ENCODE measurements at regions of chr2 and their contacts with region 1.

Region 1: DNA sequence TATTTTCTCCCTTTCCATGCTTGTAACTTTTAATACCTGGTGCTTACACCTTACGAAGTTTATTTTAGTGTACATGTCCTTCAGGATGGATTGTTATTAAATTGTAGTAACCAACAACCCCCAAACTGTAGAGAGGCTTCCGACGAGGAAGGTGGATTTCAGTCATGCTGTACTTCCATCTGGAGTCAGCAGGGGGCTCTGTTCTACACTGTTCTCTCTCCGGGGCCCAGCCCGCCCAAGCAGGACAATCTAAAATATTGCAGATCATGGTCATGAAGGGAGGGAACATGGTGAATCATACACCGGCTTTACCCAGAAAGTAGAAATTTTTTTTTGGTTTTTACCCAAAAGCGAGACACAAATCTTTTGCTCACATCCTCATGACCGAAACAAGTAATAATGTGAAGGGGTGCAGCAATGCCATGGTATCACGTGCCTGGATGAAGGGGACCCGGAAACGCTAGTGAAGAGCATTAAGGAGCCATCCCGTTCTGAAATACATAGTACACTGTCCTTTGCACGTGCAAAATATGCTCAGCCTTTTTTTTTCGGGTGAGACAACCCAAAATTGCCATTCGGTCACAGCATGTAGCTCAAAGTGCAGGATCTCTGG is 884.8 kb downstream of the EPHA4 start:
- DNase-seq: peak; percentile 44
- ATAC-seq: peak; percentile 97
- H3K4me3 ChIP-seq: no peak overlapping the region
- H3K27ac ChIP-seq: no peak overlapping the region
- H3K4me1 ChIP-seq: no peaks in the 10 kb centered on the region
- H3K27me3 ChIP-seq: no peaks in the 10 kb centered on the region
- CTCF ChIP-seq: peak; percentile 61 to 89 (median 84); a peak in 5 of 6 replicates
- POLR2A ChIP-seq: no peak
- RAD21 ChIP-seq: peak; percentile 85

Region 2: GRCh38 chr2:221100467-221101089 is 413.2 kb after region 1 on chr2:
- CTCF ChIA-PET with region 1: no interaction called
- POLR2A ChIA-PET with region 1: no interaction called
- RAD21 ChIA-PET with region 1: no interaction called
- intact Hi-C with region 1: loop called (anchors 1 kb)
- DNase-seq: peak; percentile 3
- ATAC-seq: peak; percentile 81
- H3K4me3 ChIP-seq: no peak overlapping the region
- H3K27ac ChIP-seq: no peak overlapping the region
- H3K4me1 ChIP-seq: no peaks in the 10 kb centered on the region
- H3K27me3 ChIP-seq: peaks cover 3% of the 10 kb centered on the region; the same call in 1 of the 2 replicates
- CTCF ChIP-seq: peak; percentile 39 to 47 (median 43); a peak in 5 of 6 replicates
- POLR2A ChIP-seq: no peak
- RAD21 ChIP-seq: peak; percentile 67

Region 3: DNA sequence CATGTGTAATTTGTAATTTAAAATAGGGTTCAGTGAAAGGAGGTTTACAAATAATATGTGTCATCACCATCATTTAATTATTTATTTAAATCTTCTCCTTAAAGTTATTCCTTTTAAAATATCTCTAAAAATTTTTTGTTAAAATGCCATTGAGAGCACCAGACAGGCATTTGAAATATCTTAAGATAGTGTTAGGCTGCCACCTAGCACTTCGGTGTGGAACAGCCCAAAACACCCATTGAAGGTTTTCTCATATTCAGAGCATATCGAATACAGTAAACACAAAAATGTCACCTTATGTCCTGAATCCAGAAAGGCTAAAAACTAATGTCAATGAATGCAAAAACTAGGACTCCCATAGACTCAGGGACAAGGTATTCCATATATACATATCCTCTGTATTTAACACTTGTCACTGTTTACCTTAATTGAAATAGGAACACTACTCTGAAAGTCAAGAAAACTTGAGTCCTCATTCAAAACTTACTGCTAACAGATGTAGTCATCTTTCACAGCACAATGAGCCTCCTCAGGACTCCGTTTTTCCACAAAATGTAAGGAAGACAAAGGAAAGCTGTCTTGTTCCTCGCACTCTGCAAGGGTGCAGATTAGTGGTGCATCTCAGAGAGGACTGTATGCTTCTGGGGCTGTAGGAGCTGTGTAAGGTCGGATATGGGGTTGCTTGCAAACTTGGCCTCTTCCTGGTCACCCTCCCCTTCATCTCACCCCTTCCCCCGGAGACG is 1281.9 kb after region 1 on chr2:
- CTCF ChIA-PET with region 1: no interaction called
- POLR2A ChIA-PET with region 1: no interaction called
- RAD21 ChIA-PET with region 1: no interaction called
- intact Hi-C with region 1: loop called (anchors 5 kb)
- DNase-seq: peak; percentile 13
- ATAC-seq: peak; percentile 93
- H3K4me3 ChIP-seq: no peak overlapping the region
- H3K27ac ChIP-seq: no peak overlapping the region
- H3K4me1 ChIP-seq: no peaks in the 10 kb centered on the region
- H3K27me3 ChIP-seq: peaks cover 23% of the 10 kb centered on the region; the same call in 1 of the 2 replicates
- CTCF ChIP-seq: peak; percentile 47 to 62 (median 55); a peak in 5 of 6 replicates
- POLR2A ChIP-seq: no peak
- RAD21 ChIP-seq: peak; percentile 79

Measured in HCT116 (cell line).